WTC11 (cell line): ENCODE measurements at regions of chr3 and their contacts with region 1.

Region 1: DNA sequence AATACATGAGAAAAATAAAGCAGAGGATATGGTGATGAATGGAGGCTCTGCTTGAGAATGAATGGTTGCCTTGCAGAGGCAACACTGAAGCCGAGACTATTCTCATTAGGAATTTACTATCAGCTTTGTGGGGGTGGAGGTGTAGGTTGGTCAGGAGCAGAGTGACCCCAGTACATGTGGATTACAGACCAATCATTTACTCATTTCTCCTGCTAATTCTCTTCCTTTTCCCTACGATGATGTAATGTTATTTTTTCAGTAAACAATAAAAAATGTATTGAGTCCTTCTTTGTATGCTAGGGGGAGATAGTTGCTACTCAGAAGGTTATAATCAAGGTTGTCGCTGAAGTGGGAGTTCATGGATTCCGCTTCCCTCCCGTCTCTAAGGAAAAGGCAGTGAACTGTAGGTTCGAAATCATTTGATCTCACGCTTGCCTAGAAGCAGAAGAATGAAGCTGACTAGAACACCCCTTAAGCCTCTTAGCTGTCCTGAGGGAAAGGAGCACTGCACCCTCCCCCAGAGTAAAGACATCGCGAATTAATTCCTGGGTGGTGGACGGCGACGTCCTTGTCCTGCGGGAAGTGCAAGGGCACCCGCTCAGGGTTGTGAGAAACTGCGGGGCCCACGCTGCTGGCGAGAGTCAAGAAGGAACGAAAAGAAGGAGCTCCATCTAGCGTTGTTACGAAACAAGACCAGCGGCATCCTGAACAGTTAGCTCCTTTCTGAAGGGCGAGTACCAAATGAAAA is 213.2 kb upstream of the PFN2 start:
- DNase-seq: peak; percentile 72
- ATAC-seq: peak; percentile 96
- H3K4me3 Mint-ChIP-seq: no peak overlapping the region
- H3K27ac Mint-ChIP-seq: no peak overlapping the region
- H3K4me1 Mint-ChIP-seq: peaks cover 7% of the 10 kb centered on the region
- H3K27me3 Mint-ChIP-seq: no peaks in the 10 kb centered on the region
- CTCF ChIP-seq: no peak

Region 2: GRCh38 chr3:149967086-149967685 is 216.7 kb before region 1 on chr3:
- CTCF ChIA-PET with region 1: interaction called, 38 read pairs
- POLR2A ChIA-PET with region 1: interaction called, 3 read pairs
- DNase-seq: no peak
- ATAC-seq: no peak
- H3K4me3 Mint-ChIP-seq: peak overlapping the region; percentile 91
- H3K27ac Mint-ChIP-seq: peak overlapping the region; percentile 76
- H3K4me1 Mint-ChIP-seq: peaks cover 54% of the 10 kb centered on the region
- H3K27me3 Mint-ChIP-seq: no peaks in the 10 kb centered on the region; the same call in 1 of the 2 replicates
- CTCF ChIP-seq: no peak

Region 3: GRCh38 chr3:150130404-150131100 is 53.3 kb before region 1 on chr3:
- CTCF ChIA-PET with region 1: interaction called, 12 read pairs
- POLR2A ChIA-PET with region 1: interaction called, 3 read pairs
- DNase-seq: peak; percentile 80
- ATAC-seq: peak; percentile 93
- H3K4me3 Mint-ChIP-seq: peak overlapping the region; percentile 18
- H3K27ac Mint-ChIP-seq: peak overlapping the region; percentile 46
- H3K4me1 Mint-ChIP-seq: peaks cover 42% of the 10 kb centered on the region
- H3K27me3 Mint-ChIP-seq: no peaks in the 10 kb centered on the region; the same call in 1 of the 2 replicates
- CTCF ChIP-seq: no peak

Region 4: DNA sequence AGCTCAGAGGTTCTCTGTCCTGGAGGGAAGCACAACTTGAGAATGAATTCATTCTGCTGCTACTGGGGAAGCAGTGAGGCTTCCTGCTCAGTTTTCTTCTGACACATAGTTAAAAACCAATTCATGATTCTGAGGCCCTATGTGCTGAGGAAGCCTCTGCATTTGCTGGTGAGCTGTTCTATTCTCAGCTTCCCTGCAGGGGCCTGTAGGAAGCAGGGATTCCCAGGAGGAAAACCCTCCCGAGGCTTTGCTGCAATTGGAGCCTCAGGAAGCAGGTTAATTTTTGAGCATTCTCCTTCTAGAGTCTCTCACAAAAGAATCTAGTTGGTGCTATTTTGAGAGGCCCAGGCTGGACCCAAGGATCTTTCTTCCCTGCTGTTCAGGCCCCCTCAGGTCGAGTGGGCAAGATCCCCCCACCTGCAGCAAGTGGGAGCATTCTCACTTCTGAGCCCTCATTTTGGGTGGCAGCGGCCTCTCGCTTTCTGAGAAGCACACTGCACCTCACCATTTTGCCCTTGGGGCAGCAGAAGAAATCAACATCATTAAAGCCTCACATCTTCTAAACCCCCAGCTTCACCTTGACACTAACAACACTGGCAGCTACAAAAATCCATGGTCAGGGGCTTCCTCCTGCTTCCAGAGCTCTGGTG is 26.7 kb after region 1 on chr3:
- CTCF ChIA-PET with region 1: interaction called, 15 read pairs
- POLR2A ChIA-PET with region 1: no interaction called
- DNase-seq: no peak
- ATAC-seq: peak; percentile 91
- H3K4me3 Mint-ChIP-seq: no peak overlapping the region
- H3K27ac Mint-ChIP-seq: no peak overlapping the region
- H3K4me1 Mint-ChIP-seq: peaks cover 20% of the 10 kb centered on the region
- H3K27me3 Mint-ChIP-seq: no peaks in the 10 kb centered on the region; the same call in 1 of the 2 replicates
- CTCF ChIP-seq: no peak